ENCODE measurements at regions of chr3 and their contacts with region 1.

Region 1: DNA sequence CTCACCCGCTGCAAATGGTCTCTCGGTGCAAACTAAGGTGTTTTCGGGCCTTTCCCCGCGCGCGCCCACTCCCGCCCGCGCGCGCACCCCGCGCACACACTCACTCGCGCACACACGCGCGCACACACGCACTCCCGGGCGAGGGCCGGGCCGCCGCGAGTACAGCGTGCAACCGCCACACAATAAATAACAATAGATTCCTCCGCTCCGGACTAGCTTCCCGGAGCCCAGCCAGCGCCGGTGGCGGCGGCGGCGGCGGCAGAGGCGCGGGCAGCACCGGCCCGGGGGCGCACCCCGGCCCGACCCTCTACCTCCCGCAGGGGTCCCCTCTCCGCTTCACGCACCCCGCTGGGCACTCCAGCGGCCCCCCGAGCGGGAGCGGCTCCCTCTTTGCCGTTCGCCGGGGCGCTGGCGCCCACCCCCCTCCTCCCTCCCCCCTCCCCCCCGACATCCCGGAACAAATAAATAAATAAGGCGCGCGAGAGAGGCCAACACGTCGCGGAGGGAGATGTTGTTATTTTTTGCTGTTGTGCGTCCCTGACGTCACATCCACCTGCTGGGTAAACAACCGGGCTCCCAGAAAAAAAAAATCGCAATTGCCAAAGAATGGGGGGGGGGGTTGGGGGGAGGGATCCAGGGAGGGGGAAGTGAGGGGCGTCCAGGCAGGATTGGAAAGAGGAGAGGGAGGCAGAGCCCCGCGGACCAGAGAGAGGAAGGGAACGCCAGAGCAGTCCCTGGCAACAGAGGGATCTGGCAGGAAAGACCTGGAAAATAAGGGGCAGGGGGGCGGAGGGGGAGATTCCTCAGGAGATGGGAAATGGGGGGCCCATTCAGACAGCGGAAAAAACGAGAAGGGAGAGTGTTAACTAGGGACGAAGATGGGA is at the start of gene FOXP1:
- DNase-seq: no peak
- H3K4me3 ChIP-seq: peak within 1 kb of the TSS; percentile 88
- CTCF ChIP-seq: no peak

Region 2: GRCh38 chr3:70531063-70531657 is 1052.6 kb before region 1 on chr3:
- CTCF ChIA-PET with region 1: interaction called, 10 read pairs
- POLR2A ChIA-PET with region 1: no interaction called
- DNase-seq: no peak
- H3K4me3 ChIP-seq: no peak overlapping the region
- CTCF ChIP-seq: peak; percentile 23

Region 3: DNA sequence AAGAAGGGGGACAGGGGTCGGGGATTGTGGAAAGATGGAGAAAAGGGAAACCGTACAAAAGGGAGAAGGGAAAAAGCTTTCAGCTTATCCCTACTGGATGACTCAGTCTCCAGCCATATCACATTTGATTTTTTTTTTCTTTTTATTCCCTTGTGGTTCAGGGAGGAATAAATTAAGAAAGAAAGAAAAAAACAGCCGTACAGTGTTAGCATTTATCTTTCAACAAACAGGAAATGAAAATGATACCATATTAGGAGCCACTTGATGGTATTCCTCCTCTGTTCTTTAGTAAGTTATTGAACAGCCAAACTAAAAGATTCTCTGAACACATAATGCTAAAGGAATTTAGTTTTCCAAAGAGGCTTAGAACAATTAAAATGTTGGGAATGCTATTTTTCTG is 594.6 kb before region 1 on chr3:
- CTCF ChIA-PET with region 1: no interaction called
- POLR2A ChIA-PET with region 1: no interaction called
- DNase-seq: peak; percentile 17
- H3K4me3 ChIP-seq: no peak overlapping the region
- CTCF ChIP-seq: no peak

Region 4: DNA sequence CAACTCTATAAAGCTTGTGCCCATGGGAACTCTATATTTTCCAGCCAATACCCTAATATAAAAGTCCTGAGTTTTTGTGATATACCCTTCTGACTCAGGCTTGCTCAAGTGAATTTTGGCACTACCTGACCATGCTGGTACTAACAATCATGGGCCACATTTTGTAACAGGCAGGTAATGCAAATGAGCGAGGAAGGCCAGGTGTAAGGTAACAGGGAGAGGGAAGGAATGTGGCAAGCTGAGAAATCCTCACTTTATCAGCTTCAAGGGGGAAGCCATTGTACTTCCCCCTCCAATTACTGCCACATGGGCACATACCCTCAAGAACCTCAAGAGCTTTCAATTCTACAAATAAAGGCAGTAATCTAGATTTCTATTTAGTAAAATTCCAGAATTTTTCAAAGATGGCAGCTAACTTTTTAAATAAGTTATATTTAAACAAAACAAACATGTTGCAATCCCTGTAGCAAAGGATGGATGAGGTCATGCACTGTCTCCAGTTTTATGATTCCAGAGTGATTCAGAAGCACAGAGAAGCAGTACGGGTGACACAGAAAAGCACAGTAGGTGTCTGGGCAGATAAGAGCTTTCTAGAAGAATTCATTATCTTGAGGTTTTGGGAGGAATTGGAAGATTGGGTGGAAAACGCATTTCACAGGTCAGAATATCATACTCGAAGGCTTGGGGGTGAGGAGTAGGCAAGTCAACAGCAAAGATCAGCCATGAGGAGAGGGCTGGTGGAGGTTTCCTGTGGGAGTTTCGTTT is 87.9 kb before region 1 on chr3:
- CTCF ChIA-PET with region 1: interaction called, 8 read pairs
- POLR2A ChIA-PET with region 1: interaction called, 18 read pairs
- DNase-seq: peak; percentile 82
- H3K4me3 ChIP-seq: no peak overlapping the region
- CTCF ChIP-seq: no peak

Region 5: GRCh38 chr3:71512000-71512399 is 71.8 kb before region 1 on chr3:
- CTCF ChIA-PET with region 1: interaction called, 14 read pairs
- POLR2A ChIA-PET with region 1: interaction called, 30 read pairs
- DNase-seq: no peak
- H3K4me3 ChIP-seq: no peak overlapping the region
- CTCF ChIP-seq: no peak

Region 6: DNA sequence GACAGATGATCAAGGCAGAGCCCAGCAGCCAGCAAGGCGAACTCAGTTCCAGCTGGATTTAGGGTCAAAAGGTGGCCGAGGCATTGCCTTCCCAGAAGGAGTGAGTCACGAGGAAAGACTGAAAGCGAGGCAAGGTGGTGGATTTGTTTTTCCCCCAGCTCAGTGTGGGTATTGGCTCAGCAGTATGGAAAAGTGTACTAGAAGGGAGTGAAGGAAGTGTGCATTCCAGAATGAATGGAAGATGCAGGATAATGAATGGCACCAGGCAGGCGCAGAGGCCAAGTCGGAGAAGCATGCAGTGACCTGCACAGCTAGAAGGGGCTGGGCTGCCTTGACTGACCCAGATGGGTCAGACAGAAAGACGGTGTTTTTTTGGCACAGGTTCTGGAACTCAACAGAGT is 46.6 kb before region 1 on chr3:
- CTCF ChIA-PET with region 1: no interaction called
- POLR2A ChIA-PET with region 1: interaction called, 10 read pairs
- DNase-seq: peak; percentile 81
- H3K4me3 ChIP-seq: peak overlapping the region; percentile 6; the same call in 1 of the 2 replicates
- CTCF ChIP-seq: no peak

Region 7: GRCh38 chr3:71542521-71543370 is 41.1 kb before region 1 on chr3:
- CTCF ChIA-PET with region 1: no interaction called
- POLR2A ChIA-PET with region 1: interaction called, 10 read pairs
- DNase-seq: peak; percentile 81
- H3K4me3 ChIP-seq: peak overlapping the region; percentile 36
- CTCF ChIP-seq: no peak

Region 8: GRCh38 chr3:71599416-71599815 is 15.6 kb after region 1 on chr3:
- CTCF ChIA-PET with region 1: interaction called, 18 read pairs
- POLR2A ChIA-PET with region 1: no interaction called
- DNase-seq: no peak
- H3K4me3 ChIP-seq: no peak overlapping the region
- CTCF ChIP-seq: no peak

Region 9: GRCh38 chr3:71641674-71642073 is 57.9 kb after region 1 on chr3:
- CTCF ChIA-PET with region 1: no interaction called
- POLR2A ChIA-PET with region 1: no interaction called
- DNase-seq: no peak
- H3K4me3 ChIP-seq: no peak overlapping the region
- CTCF ChIP-seq: no peak